Pancreas (tissue), 10 donors: ENCODE measurements at regions of chr6 and their contacts with region 1.

Region 1: GRCh38 chr6:125779924-125780539 is 10.7 kb upstream of the NCOA7 start:
- DNase-seq: peak; percentile 75 to 91 (median 83)
- ATAC-seq: peak; percentile 92 to 96 (median 93)
- H3K4me3 ChIP-seq: peak overlapping the region; percentile 31 to 54 (median 43)
- H3K27ac ChIP-seq: peak overlapping the region; percentile 74 to 96 (median 89)
- H3K4me1 ChIP-seq: peaks cover 0 to 5% (median 0%) of the 10 kb centered on the region in 3 donors
- H3K27me3 ChIP-seq: no peaks in the 10 kb centered on the region
- CTCF ChIP-seq: peak in 2 of 4 donors; percentile 19 to 32

Region 2: GRCh38 chr6:125956506-125957390 is 176.7 kb after region 1 on chr6 and contains the start of gene HINT3:
- intact Hi-C with region 1: loop called in 1 of 3 experiments (anchors 10 kb)
- DNase-seq: peak; percentile 96 to 100 (median 98)
- ATAC-seq: peak; percentile 88 to 95 (median 90)
- H3K4me3 ChIP-seq: peak within 1 kb of the TSS; percentile 85 to 94 (median 90)
- H3K27ac ChIP-seq: peak within 1 kb of the TSS; percentile 95 to 99 (median 98)
- H3K4me1 ChIP-seq: peaks cover 4 to 25% (median 16%) of the 10 kb centered on the region in 3 donors
- H3K27me3 ChIP-seq: no peaks in the 10 kb centered on the region
- CTCF ChIP-seq: peak; percentile 94 to 98 (median 98)
- total RNA-seq, gene HINT3: 9.9 to 15.7 (median 11.9) TPM